PC-3 (cell line): ENCODE measurements at regions of chr10 and their contacts with region 1.

Region 1: GRCh38 chr10:52951824-52952223 is 179.2 kb upstream of the MBL2 start:
- DNase-seq: peak; percentile 97
- ATAC-seq: peak; percentile 44
- H3K4me3 ChIP-seq: no peak overlapping the region
- H3K27ac ChIP-seq: no peak overlapping the region
- H3K4me1 ChIP-seq: peaks cover 24% of the 10 kb centered on the region
- H3K27me3 ChIP-seq: no peaks in the 10 kb centered on the region
- CTCF ChIP-seq: peak; percentile 99

Region 2: DNA sequence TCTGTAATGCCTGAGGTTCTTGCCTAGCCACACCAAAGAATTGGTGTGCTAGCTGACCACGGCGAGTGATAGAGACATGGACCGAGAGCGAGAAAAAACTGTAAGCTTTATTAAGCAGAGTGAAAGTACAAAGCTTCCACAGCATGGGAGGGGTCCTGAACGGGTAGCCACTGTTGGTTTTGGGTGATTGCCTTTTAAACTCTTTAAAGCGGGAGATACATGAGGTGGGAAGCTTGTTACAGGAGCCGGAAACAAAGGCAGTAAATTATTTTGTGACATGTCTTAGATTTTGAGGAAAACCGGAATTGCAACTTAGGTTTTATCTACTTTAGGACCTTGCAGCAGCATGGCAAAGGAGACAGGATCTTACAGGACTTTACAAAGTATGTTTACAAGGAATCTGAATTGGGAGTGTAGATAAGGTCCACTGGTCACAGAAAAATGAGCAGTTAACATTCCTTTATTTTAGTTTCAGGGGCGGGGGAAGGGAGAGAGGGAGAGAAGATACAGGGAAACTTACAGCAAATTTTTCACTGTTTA is 73.4 kb after region 1 on chr10:
- CTCF ChIA-PET with region 1: interaction called, 5 read pairs
- POLR2A ChIA-PET with region 1: no interaction called
- intact Hi-C with region 1: loop called (anchors 1 kb)
- DNase-seq: peak; percentile 85
- ATAC-seq: peak; percentile 81
- H3K4me3 ChIP-seq: peak overlapping the region; percentile 60
- H3K27ac ChIP-seq: peak overlapping the region; percentile 9
- H3K4me1 ChIP-seq: peaks cover 40% of the 10 kb centered on the region
- H3K27me3 ChIP-seq: no peaks in the 10 kb centered on the region
- CTCF ChIP-seq: no peak

Region 3: GRCh38 chr10:53102424-53102823 is 150.6 kb after region 1 on chr10:
- CTCF ChIA-PET with region 1: interaction called, 4 read pairs
- POLR2A ChIA-PET with region 1: no interaction called
- intact Hi-C with region 1: loop called (anchors 2 kb)
- DNase-seq: peak; percentile 90
- ATAC-seq: peak; percentile 99
- H3K4me3 ChIP-seq: no peak overlapping the region
- H3K27ac ChIP-seq: no peak overlapping the region
- H3K4me1 ChIP-seq: peaks cover 13% of the 10 kb centered on the region
- H3K27me3 ChIP-seq: no peaks in the 10 kb centered on the region
- CTCF ChIP-seq: no peak

Region 4: DNA sequence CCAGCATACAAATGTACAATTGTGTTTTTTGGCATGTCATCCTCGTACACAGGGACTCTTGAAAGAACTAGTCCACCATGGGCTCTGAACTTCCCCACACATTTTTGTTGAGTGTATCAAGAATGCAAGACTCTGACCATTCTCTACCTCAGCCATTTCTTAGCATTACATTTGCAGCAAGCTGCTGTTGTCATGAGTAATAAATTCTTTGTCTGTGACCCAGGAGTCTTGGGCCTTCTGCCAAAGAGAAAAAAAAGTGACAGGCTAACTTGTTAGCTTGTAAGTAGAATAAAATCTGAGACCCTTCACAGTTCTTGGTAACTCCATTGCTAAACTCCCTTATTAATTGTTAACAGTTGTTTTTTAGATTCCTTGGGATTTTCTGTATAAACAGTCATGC is 363.1 kb after region 1 on chr10:
- CTCF ChIA-PET with region 1: interaction called, 6 read pairs
- POLR2A ChIA-PET with region 1: no interaction called
- intact Hi-C with region 1: loop called (anchors 1 kb)
- DNase-seq: peak; percentile 100
- ATAC-seq: peak; percentile 97
- H3K4me3 ChIP-seq: no peak overlapping the region
- H3K27ac ChIP-seq: no peak overlapping the region
- H3K4me1 ChIP-seq: peaks cover 14% of the 10 kb centered on the region
- H3K27me3 ChIP-seq: no peaks in the 10 kb centered on the region
- CTCF ChIP-seq: no peak

Region 5: DNA sequence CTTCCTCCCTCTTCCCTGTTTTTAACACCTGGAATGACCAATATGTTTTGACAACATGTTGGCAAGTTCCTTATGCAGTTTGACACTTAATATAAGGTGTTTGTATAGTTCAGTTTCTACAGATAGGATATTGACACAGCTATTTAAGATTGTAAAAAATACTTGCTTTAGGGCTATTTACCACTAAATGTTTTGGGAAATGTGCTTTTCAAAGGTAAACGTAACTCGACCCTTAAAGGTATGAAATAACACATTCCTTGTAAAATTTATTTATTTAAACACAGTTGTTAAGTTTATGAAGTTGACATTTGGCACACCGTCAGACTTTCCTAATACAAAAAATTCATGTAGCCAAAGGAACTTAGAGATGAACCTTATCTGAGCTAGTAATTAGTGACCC is 1031.6 kb after region 1 on chr10:
- CTCF ChIA-PET with region 1: no interaction called
- POLR2A ChIA-PET with region 1: no interaction called
- intact Hi-C with region 1: loop called (anchors 1 kb)
- DNase-seq: no peak
- ATAC-seq: peak; percentile 85
- H3K4me3 ChIP-seq: no peak overlapping the region
- H3K27ac ChIP-seq: no peak overlapping the region
- H3K4me1 ChIP-seq: no peaks in the 10 kb centered on the region
- H3K27me3 ChIP-seq: no peaks in the 10 kb centered on the region
- CTCF ChIP-seq: no peak